ENCODE measurements at regions of chr20 and their contacts with region 1.

Region 1: GRCh38 chr20:21571841-21572690 is 58.2 kb upstream of the NKX2-2 start:
- DNase-seq: peak; percentile 24
- H3K4me3 Mint-ChIP-seq: no peak overlapping the region
- H3K27ac Mint-ChIP-seq: no peak overlapping the region
- H3K4me1 Mint-ChIP-seq: peaks cover 14% of the 10 kb centered on the region
- H3K27me3 Mint-ChIP-seq: peaks cover 28% of the 10 kb centered on the region

Region 2: GRCh38 chr20:21529863-21530262 is 42.2 kb before region 1 on chr20:
- CTCF ChIA-PET with region 1: interaction called, 32 read pairs
- POLR2A ChIA-PET with region 1: interaction called, 7 read pairs
- DNase-seq: no peak
- H3K4me3 Mint-ChIP-seq: no peak overlapping the region
- H3K27ac Mint-ChIP-seq: no peak overlapping the region
- H3K4me1 Mint-ChIP-seq: peaks cover 3% of the 10 kb centered on the region
- H3K27me3 Mint-ChIP-seq: peaks cover 64% of the 10 kb centered on the region

Region 3: GRCh38 chr20:21548390-21549035 is 23.6 kb before region 1 on chr20:
- CTCF ChIA-PET with region 1: interaction called, 17 read pairs
- POLR2A ChIA-PET with region 1: interaction called, 4 read pairs
- DNase-seq: peak; percentile 62
- H3K4me3 Mint-ChIP-seq: peak overlapping the region; percentile 48
- H3K27ac Mint-ChIP-seq: peak overlapping the region; percentile 78
- H3K4me1 Mint-ChIP-seq: peaks cover 32% of the 10 kb centered on the region
- H3K27me3 Mint-ChIP-seq: peaks cover 3% of the 10 kb centered on the region

Region 4: DNA sequence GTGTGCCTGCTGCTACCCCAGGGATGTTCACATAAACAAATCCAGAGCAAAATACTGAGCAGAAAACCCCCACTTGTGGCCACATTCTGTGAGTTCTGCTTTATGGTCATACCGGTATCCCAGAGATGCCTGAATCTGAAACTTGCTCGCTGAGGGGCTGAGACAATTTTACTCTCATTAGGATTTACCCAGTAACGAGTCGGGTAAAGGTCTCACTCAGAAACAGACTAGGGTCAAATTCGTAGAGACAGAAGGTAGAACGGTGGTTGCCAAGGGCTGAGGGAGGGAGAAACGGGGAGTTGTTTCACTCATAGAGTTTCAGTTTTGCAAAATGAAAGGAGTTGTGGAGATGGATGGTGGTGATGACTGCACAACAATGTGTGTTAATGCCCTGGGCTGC is 12.8 kb before region 1 on chr20:
- CTCF ChIA-PET with region 1: interaction called, 26 read pairs
- POLR2A ChIA-PET with region 1: interaction called, 17 read pairs
- DNase-seq: peak; percentile 40
- H3K4me3 Mint-ChIP-seq: peak overlapping the region; percentile 78
- H3K27ac Mint-ChIP-seq: peak overlapping the region; percentile 80
- H3K4me1 Mint-ChIP-seq: peaks cover 49% of the 10 kb centered on the region
- H3K27me3 Mint-ChIP-seq: peaks cover 8% of the 10 kb centered on the region

Region 5: GRCh38 chr20:21615617-21616080 is 43.6 kb after region 1 on chr20:
- CTCF ChIA-PET with region 1: interaction called, 14 read pairs
- POLR2A ChIA-PET with region 1: no interaction called
- DNase-seq: peak; percentile 50
- H3K4me3 Mint-ChIP-seq: no peak overlapping the region
- H3K27ac Mint-ChIP-seq: no peak overlapping the region
- H3K4me1 Mint-ChIP-seq: peaks cover 4% of the 10 kb centered on the region
- H3K27me3 Mint-ChIP-seq: peaks cover 7% of the 10 kb centered on the region